ENCODE measurements at regions of chr1 and their contacts with region 1.

Region 1: DNA sequence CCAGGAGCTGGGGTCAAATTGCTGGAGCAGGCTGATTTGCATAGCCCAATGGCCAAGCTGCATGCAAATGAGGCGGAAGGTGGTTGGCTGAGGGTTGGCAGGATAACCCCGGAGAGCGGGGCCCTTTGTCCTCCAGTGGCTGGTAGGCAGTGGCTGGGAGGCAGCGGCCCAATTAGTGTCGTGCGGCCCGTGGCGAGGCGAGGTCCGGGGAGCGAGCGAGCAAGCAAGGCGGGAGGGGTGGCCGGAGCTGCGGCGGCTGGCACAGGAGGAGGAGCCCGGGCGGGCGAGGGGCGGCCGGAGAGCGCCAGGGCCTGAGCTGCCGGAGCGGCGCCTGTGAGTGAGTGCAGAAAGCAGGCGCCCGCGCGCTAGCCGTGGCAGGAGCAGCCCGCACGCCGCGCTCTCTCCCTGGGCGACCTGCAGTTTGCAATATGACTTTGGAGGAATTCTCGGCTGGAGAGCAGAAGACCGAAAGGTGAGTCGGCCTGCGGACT is at the start of gene GADD45A:
- DNase-seq: peak; percentile 99
- H3K4me3 Mint-ChIP-seq: peak within 1 kb of the TSS; percentile 87
- H3K27ac Mint-ChIP-seq: peak within 1 kb of the TSS; percentile 89
- H3K4me1 Mint-ChIP-seq: peaks cover 34% of the 10 kb centered on the region
- H3K27me3 Mint-ChIP-seq: no peaks in the 10 kb centered on the region
- CTCF ChIP-seq: no peak
- total RNA-seq, gene GADD45A: 183 and 225 TPM in 2 replicates

Region 2: GRCh38 chr1:67535474-67535873 is 149.6 kb before region 1 on chr1:
- CTCF ChIA-PET with region 1: interaction called, 22 read pairs
- POLR2A ChIA-PET with region 1: interaction called, 69 read pairs
- intact Hi-C with region 1: loop called (anchors 1 kb)
- DNase-seq: peak; percentile 85
- H3K4me3 Mint-ChIP-seq: no peak overlapping the region
- H3K27ac Mint-ChIP-seq: peak overlapping the region; percentile 12
- H3K4me1 Mint-ChIP-seq: peaks cover 6% of the 10 kb centered on the region
- H3K27me3 Mint-ChIP-seq: no peaks in the 10 kb centered on the region
- CTCF ChIP-seq: peak; percentile 95

Region 3: GRCh38 chr1:67580646-67581403 is 104.3 kb before region 1 on chr1:
- CTCF ChIA-PET with region 1: interaction called, 3 read pairs
- POLR2A ChIA-PET with region 1: interaction called, 142 read pairs
- intact Hi-C with region 1: no loop called
- DNase-seq: no peak
- H3K4me3 Mint-ChIP-seq: no peak overlapping the region
- H3K27ac Mint-ChIP-seq: no peak overlapping the region
- H3K4me1 Mint-ChIP-seq: peaks cover 6% of the 10 kb centered on the region
- H3K27me3 Mint-ChIP-seq: no peaks in the 10 kb centered on the region
- CTCF ChIP-seq: no peak

Region 4: DNA sequence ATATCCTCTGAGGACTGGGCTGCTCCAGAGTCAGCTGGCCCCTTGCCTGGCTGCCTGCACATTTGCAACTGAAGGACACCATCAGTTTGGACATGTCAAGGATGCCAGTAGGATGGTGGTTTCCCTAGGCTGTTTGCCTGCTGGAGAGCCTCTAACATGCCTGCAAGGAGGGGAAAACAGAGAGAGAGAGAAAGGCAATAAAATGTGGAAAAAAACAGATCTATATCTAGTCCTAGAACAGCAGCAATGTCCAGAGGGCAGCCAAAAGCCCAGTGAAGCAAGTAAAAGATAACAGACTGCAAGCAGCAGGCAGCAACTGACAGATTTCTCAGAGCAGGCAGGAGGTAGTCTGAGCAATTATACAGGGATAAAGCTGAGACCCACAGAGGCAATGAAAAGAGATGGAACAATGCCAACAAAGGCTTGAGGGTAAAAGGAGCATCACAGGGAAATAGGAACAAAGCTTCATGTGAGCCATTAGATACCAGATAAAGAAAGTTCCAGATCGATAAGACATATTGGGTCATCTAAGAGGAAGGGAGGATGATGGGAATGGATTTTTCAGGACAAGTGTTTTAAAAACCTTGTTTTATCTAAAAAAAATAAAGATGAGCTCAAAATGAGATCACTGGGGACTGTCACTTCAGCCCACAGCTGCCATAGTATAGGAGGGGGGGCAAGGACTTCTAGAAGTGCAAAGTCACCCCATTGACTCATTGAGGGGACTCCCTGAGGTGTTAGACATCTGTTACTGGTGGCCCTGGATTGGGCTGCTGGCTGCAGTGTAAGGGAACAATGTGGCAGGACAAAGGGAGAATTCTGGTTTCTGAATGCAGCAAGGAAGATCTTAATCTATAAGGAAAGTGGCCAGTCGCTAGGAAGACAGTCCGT is 38.7 kb before region 1 on chr1:
- CTCF ChIA-PET with region 1: interaction called, 5 read pairs
- POLR2A ChIA-PET with region 1: interaction called, 11 read pairs
- intact Hi-C with region 1: no loop called
- DNase-seq: no peak
- H3K4me3 Mint-ChIP-seq: no peak overlapping the region
- H3K27ac Mint-ChIP-seq: no peak overlapping the region
- H3K4me1 Mint-ChIP-seq: no peaks in the 10 kb centered on the region
- H3K27me3 Mint-ChIP-seq: no peaks in the 10 kb centered on the region
- CTCF ChIP-seq: no peak

Region 5: DNA sequence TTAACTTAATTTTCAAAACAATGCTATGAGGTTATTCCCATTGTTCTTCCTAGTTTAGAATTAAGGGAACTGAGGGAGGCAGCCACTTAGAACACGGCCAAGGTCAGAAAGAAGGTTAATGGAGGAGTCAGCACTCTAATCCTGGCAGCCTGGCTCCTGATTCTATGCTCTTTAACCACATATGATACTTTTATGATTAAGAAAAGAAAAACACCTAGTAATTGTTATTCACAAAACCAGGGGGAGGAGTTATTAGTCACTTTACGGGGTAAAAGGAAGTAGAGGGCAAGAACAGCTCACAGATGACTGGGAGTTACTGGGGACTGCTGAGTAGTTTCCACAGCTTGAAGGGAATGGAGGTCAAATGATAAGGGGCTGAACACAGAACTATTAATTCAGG is 38.5 kb after region 1 on chr1:
- CTCF ChIA-PET with region 1: interaction called, 4 read pairs
- POLR2A ChIA-PET with region 1: interaction called, 130 read pairs
- intact Hi-C with region 1: no loop called
- DNase-seq: peak; percentile 77
- H3K4me3 Mint-ChIP-seq: no peak overlapping the region
- H3K27ac Mint-ChIP-seq: no peak overlapping the region
- H3K4me1 Mint-ChIP-seq: peaks cover 16% of the 10 kb centered on the region
- H3K27me3 Mint-ChIP-seq: no peaks in the 10 kb centered on the region
- CTCF ChIP-seq: no peak

Region 6: GRCh38 chr1:67753776-67754525 is 68.8 kb after region 1 on chr1:
- CTCF ChIA-PET with region 1: interaction called, 63 read pairs
- POLR2A ChIA-PET with region 1: interaction called, 446 read pairs
- intact Hi-C with region 1: loop called (anchors 1 kb)
- DNase-seq: peak; percentile 69
- H3K4me3 Mint-ChIP-seq: peak overlapping the region; percentile 38
- H3K27ac Mint-ChIP-seq: peak overlapping the region; percentile 89
- H3K4me1 Mint-ChIP-seq: peaks cover 56% of the 10 kb centered on the region
- H3K27me3 Mint-ChIP-seq: no peaks in the 10 kb centered on the region
- CTCF ChIP-seq: no peak

Region 7: DNA sequence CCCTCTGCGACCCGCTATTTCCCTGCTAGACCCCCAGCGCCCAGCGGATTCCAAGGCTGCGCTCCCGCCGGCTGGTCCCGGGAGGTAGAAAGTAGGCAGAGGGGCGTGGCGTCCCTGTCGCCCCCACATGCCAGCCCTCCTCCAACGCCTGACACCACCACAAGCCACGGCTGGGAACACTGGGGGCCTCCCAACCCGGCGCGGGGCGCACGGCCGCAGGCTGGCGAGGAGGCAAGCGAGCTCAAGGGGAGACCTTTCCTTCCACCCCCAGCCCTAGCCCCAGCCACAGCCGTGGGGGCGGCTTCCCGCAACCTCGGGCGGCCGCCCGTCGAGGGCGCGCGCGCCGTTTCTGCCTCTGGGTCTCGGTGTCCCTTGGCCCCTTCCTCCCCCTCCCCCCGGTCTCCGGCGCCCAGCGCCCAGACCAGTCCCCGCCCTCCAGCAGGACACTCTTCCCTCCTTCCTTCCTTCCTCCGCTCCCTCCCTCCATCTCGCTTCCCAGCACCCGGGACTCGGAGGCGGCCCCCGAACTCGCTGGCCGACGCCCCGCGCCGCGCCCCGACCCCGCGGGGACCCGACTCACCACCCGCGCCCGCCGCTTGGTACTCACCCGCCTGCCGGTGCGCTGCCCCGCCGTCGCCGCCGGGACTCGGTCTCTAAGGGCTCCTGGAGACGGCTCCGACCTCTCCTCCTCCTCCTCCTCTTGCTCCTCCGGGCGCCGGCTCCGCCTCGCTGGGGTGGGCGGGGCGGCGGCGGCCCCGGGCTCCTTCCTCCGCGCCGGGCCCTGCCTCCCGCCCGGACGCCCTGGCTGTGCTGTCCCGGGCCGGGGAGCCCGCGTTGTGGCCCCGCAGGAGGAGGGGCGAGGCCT is 147.9 kb after region 1 on chr1 and contains the start of gene GNG12:
- CTCF ChIA-PET with region 1: interaction called, 3 read pairs
- POLR2A ChIA-PET with region 1: interaction called, 42 read pairs
- intact Hi-C with region 1: loop called (anchors 1 kb)
- DNase-seq: peak; percentile 83
- H3K4me3 Mint-ChIP-seq: peak within 1 kb of the TSS; percentile 92
- H3K27ac Mint-ChIP-seq: peak within 1 kb of the TSS; percentile 99
- H3K4me1 Mint-ChIP-seq: peaks cover 28% of the 10 kb centered on the region
- H3K27me3 Mint-ChIP-seq: no peaks in the 10 kb centered on the region
- CTCF ChIP-seq: no peak
- total RNA-seq, gene GNG12: 117 and 135 TPM in 2 replicates

Measured in MCF 10A (cell line).